ENCODE measurements at regions of chr11 and their contacts with region 1.

Region 1: GRCh38 chr11:12485328-12485727 is 108.0 kb downstream of the PARVA start:
- DNase-seq: no peak
- ATAC-seq: no peak
- H3K4me3 ChIP-seq: no peak overlapping the region
- H3K27ac ChIP-seq: no peak overlapping the region
- H3K4me1 ChIP-seq: peaks cover 0 to 24% (median 9%) of the 10 kb centered on the region in 12 donors
- H3K27me3 ChIP-seq: no peaks in the 10 kb centered on the region
- CTCF ChIP-seq: peak in 8 of 12 donors; percentile 9 to 44 (median 34)
- POLR2A ChIP-seq: no peak

Region 2: GRCh38 chr11:12319988-12320387 is 165.3 kb before region 1 on chr11:
- intact Hi-C with region 1: loop called in 2 of 10 experiments (anchors 10 kb)
- DNase-seq: no peak
- ATAC-seq: no peak
- H3K4me3 ChIP-seq: no peak overlapping the region
- H3K27ac ChIP-seq: peak overlapping the region in 1 of 12 donors; percentile 75
- H3K4me1 ChIP-seq: peaks cover 0 to 11% (median 0%) of the 10 kb centered on the region in 12 donors
- H3K27me3 ChIP-seq: no peaks in the 10 kb centered on the region
- CTCF ChIP-seq: no peak
- POLR2A ChIP-seq: no peak

Region 3: DNA sequence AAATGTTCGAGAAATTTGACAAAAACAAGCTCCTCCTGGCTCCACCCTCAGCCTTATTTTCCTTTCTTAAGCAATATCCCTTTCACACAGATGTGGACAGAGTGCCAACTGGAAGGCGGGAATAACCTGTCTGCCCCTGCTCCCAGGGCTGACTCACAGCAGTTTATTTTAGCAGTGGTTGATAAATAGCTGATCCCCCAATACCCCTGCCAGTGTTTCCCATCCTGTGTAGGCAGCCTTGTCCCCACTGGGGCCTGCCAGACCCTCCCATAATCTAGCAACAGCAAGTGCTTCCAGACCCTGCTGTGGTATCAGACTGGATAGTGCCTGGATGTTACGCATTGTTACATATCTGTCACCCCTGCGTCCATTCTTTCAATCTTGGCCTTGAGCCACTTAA is 54.4 kb before region 1 on chr11:
- intact Hi-C with region 1: loop called in 1 of 10 experiments (anchors 10 kb)
- DNase-seq: peak in 4 of 5 donors; percentile 51 to 81 (median 64)
- ATAC-seq: peak; percentile 46 to 86 (median 76)
- H3K4me3 ChIP-seq: no peak overlapping the region
- H3K27ac ChIP-seq: peak overlapping the region; percentile 18 to 92 (median 64)
- H3K4me1 ChIP-seq: peaks cover 5 to 73% (median 54%) of the 10 kb centered on the region in 12 donors
- H3K27me3 ChIP-seq: no peaks in the 10 kb centered on the region
- CTCF ChIP-seq: no peak
- POLR2A ChIP-seq: peak in 1 of 2 donors; percentile 22

Region 4: DNA sequence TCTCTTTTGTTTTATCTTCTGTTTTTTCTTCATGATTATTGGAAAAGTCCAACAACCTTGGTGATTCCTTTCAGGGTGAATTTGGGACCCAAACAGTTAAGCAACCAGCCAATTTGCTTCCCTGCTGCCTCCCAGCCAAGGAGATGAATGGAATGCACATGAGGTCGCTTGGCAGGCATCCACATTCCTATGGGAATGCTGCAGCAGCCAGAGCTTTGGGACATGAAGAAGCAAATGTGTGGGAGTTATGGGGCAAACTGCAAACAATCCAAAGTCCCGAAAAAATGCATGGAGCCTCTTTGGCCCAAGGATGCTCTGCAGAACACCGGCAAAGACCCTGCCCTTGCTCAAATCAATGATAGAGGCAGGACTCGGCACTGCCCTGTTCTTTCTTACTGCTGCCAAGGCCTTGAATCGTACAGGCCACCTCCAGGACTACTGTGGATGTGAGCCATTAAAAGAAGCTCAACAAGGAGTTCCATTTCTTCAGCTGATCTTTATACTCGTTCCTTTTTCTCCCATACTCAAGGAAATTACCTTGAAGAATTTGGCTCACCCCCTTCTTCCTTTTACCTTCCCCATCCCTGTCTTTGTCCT is 71.6 kb after region 1 on chr11:
- intact Hi-C with region 1: loop called in 1 of 10 experiments (anchors 5 kb)
- DNase-seq: peak; percentile 73 to 92 (median 85)
- ATAC-seq: peak; percentile 50 to 82 (median 68)
- H3K4me3 ChIP-seq: no peak overlapping the region
- H3K27ac ChIP-seq: peak overlapping the region in 11 of 12 donors; percentile 11 to 76 (median 69)
- H3K4me1 ChIP-seq: peaks cover 0 to 30% (median 18%) of the 10 kb centered on the region in 12 donors
- H3K27me3 ChIP-seq: no peaks in the 10 kb centered on the region
- CTCF ChIP-seq: no peak
- POLR2A ChIP-seq: no peak